ENCODE measurements at regions of chr1 and their contacts with region 1.

Region 1: DNA sequence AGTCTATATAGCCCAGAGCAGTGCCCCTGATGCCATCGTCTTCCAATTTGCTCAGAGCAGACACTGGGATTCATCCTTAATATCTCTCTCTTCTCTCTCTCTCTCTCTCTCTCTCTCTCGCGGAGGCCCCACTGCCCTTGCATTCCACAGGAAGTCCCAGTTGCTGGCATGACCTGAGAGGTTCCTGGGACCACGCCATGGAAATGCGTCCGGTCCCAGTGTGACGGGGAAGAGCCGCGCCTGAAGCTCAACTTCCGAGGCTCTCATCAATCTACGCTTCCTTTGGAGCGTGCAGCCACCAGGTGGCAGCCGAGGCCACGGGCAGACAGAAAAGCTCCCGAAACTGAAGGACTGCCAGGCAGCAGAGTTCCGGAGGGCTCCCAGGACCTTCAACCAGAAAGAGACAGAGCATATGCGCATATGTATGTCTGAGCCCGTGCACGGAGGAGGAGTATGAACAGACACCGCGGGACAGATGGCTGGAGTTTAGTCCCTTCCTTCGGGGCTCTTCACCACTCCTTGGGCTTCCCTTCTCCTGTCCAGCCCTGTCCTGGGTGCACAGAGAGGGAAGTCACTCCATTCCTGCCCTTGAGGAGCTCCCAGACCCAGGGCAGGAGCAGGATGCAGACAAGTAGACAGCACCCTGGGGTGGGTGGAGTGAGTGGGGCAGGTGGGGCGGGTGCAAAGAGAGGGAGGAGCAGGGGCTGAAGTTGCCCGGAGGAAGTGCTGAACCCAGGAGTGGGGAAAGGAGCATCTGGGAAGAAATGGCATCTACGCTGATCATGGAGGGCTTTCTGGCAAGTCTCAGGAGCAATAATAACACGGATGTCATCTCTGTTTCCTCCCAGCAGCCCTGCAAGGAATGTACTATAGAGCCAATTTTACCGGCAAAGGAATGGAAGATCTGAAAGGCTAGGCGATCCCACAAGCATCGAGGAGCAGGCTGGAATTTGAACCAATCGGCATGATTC is 10.5 kb downstream of the PDZK1IP1 start:
- DNase-seq: peak; percentile 86 to 95
- H3K4me3 ChIP-seq: peak overlapping the region; percentile 54
- H3K27ac ChIP-seq: 0 out of 2 replicates have a peak overlapping the region, but pooled peaks have one; percentile 5
- H3K4me1 ChIP-seq: peaks cover 10% of the 10 kb centered on the region
- H3K27me3 ChIP-seq: no peaks in the 10 kb centered on the region
- CTCF ChIP-seq: peak; percentile 89

Region 2: GRCh38 chr1:46442317-46443161 is 736.8 kb before region 1 on chr1:
- CTCF ChIA-PET with region 1: no interaction called
- POLR2A ChIA-PET with region 1: no interaction called
- intact Hi-C with region 1: loop called (anchors 1 kb)
- DNase-seq: peak; percentile 61 to 91
- H3K4me3 ChIP-seq: peak overlapping the region; percentile 58
- H3K27ac ChIP-seq: no peak overlapping the region
- H3K4me1 ChIP-seq: 0 out of 2 replicates have a peak, but pooled peaks cover 8% of the 10 kb centered on the region
- H3K27me3 ChIP-seq: peaks cover 5% of the 10 kb centered on the region
- CTCF ChIP-seq: peak; percentile 93

Region 3: DNA sequence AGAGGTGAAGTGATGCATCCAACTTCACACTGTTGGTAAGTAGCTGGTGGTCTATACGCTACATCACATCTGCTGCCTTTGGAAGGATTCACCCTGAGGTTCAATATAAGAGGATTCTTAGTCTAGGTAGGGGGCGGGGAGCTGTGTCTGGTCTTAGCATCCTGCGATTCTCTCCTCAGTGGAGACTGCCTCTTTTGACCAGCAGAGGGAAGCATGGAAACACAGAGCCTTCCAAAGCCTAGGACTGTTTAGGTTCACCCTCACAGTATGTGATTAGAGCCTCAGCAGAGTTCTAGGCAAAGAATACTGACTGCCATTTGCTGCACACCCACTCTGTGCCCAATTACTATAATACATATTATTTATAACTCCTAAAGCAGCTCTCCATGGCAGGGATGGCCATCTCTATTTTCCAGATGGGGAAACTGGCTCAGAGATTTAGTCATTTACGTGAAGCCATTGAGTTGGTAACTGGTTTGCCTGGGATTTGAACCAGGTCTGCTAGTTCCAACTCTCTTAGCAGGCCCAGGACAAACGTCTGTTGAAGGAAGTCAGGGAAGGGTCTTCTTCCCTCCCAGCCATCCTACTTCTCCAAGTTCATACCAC is 431.5 kb before region 1 on chr1:
- CTCF ChIA-PET with region 1: no interaction called
- POLR2A ChIA-PET with region 1: no interaction called
- intact Hi-C with region 1: loop called (anchors 5 kb)
- DNase-seq: peak; percentile 61 to 67
- H3K4me3 ChIP-seq: no peak overlapping the region
- H3K27ac ChIP-seq: no peak overlapping the region
- H3K4me1 ChIP-seq: peaks cover 31% of the 10 kb centered on the region
- H3K27me3 ChIP-seq: no peaks in the 10 kb centered on the region
- CTCF ChIP-seq: peak; percentile 77

Region 4: GRCh38 chr1:47059376-47059775 is 119.9 kb before region 1 on chr1:
- CTCF ChIA-PET with region 1: no interaction called
- POLR2A ChIA-PET with region 1: no interaction called
- intact Hi-C with region 1: no loop called
- DNase-seq: no peak
- H3K4me3 ChIP-seq: no peak overlapping the region
- H3K27ac ChIP-seq: no peak overlapping the region
- H3K4me1 ChIP-seq: no peaks in the 10 kb centered on the region
- H3K27me3 ChIP-seq: no peaks in the 10 kb centered on the region
- CTCF ChIP-seq: no peak

Region 5: DNA sequence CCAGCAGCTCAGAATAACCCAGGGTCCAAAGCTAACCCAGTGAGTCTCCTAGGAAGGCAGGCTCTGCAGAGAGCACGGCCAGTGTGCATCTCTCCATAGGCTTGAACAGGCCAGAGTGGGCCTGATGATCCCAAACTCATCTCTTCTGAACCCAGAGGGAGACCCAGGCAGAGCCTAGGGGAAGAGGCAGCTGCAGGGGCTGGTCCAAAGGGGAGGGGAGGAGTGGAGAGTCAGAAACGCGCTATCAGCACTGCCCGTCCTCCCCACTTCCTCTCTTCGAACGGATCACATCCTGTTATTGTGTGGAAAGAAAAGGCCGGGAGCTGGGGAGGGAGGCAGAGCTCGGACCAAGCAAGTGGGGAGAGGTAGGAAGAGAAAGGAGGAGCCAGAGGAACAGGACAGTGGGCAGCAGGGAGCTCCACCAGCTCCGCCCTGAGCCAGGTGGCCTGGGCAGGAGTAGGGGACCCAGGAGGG is 32.5 kb after region 1 on chr1:
- CTCF ChIA-PET with region 1: no interaction called
- POLR2A ChIA-PET with region 1: no interaction called
- intact Hi-C with region 1: no loop called
- DNase-seq: no peak
- H3K4me3 ChIP-seq: no peak overlapping the region
- H3K27ac ChIP-seq: no peak overlapping the region
- H3K4me1 ChIP-seq: no peaks in the 10 kb centered on the region
- H3K27me3 ChIP-seq: no peaks in the 10 kb centered on the region
- CTCF ChIP-seq: no peak

Region 6: GRCh38 chr1:47262787-47263413 is 83.6 kb after region 1 on chr1:
- CTCF ChIA-PET with region 1: interaction called, 30 read pairs
- POLR2A ChIA-PET with region 1: no interaction called
- intact Hi-C with region 1: loop called (anchors 1 kb)
- DNase-seq: peak; percentile 32 to 40
- H3K4me3 ChIP-seq: no peak overlapping the region
- H3K27ac ChIP-seq: no peak overlapping the region
- H3K4me1 ChIP-seq: no peaks in the 10 kb centered on the region
- H3K27me3 ChIP-seq: no peaks in the 10 kb centered on the region
- CTCF ChIP-seq: peak; percentile 81

Region 7: DNA sequence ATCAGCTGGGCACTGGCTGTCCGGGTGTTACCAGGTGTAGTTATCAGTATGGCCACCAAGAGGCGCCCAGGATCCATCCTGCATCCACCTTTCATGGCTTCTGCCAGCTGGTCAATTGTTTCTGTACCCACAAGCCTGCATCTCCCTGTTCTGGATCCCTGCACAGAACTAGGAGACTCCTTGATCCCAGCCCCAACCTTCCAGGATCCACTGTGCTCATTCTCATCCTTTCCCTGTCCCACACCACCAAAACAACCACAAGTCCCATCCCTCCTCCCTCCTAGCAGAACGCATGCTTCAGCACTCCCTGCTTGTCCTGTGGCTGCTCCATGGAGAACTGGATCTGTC is 209.6 kb after region 1 on chr1:
- CTCF ChIA-PET with region 1: no interaction called
- POLR2A ChIA-PET with region 1: no interaction called
- intact Hi-C with region 1: loop called (anchors 1 kb)
- DNase-seq: peak; percentile 44 to 70
- H3K4me3 ChIP-seq: no peak overlapping the region
- H3K27ac ChIP-seq: no peak overlapping the region
- H3K4me1 ChIP-seq: peaks cover 9% of the 10 kb centered on the region; the same call in 1 of the 2 replicates
- H3K27me3 ChIP-seq: no peaks in the 10 kb centered on the region
- CTCF ChIP-seq: peak; percentile 88

Region 8: DNA sequence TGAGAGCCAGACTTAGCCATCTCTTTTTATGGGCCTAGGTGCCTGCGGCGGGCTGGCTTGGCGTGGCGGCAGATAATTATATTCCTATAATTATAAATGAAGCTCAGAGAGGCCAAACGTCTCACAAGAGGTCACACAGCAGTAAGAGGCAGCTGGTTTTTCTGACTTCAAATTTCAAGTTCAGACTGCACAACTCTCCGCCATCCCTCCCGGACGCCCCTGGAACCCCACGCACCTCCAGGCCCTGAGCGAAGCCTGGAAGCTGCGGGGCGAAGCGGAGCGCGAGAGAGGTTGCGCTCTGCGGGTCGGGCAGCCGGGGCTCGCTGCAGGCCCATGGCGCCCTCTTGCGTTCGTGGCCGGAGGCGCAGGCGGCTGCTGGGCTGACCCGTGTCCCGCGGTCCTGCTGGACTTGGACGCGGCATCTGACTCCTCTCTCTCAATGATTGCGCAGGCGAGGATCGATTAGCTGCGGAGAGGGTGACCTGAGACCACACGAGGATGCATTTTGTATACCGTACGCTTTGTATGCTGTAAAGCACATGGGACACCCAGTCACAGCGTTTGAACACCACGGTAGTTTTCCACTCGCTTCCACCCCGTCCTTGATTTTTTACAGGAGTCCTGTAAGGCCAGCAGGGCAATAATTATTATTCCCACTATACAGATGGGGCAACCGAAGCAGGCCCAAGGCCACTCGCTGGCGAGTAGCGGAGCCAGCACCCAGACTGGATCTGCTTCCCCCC is 531.2 kb after region 1 on chr1:
- CTCF ChIA-PET with region 1: no interaction called
- POLR2A ChIA-PET with region 1: no interaction called
- intact Hi-C with region 1: loop called (anchors 1 kb)
- DNase-seq: peak; percentile 49 to 78
- H3K4me3 ChIP-seq: peak overlapping the region; percentile 32; the same call in 1 of the 2 replicates
- H3K27ac ChIP-seq: no peak overlapping the region
- H3K4me1 ChIP-seq: no peaks in the 10 kb centered on the region; the same call in 1 of the 2 replicates
- H3K27me3 ChIP-seq: peaks cover 33% of the 10 kb centered on the region
- CTCF ChIP-seq: peak; percentile 96

Measured in PC-9 (cell line).